CD14-positive monocyte (primary cell): ENCODE measurements at regions of chr19 and their contacts with region 1.

Region 1: GRCh38 chr19:35628565-35629331 is at the start of gene RBM42:
- DNase-seq: peak; percentile 97 to 98 (median 97)
- H3K4me3 ChIP-seq: peak within 1 kb of the TSS; percentile 41 to 99 (median 98)
- H3K4me3 Mint-ChIP-seq: peak within 1 kb of the TSS; percentile 93 to 98
- H3K27ac ChIP-seq: peak within 1 kb of the TSS; percentile 85 to 99
- H3K27ac Mint-ChIP-seq: peak within 1 kb of the TSS; percentile 96 to 100 (median 96)
- H3K4me1 ChIP-seq: peaks cover 14 to 15% of the 10 kb centered on the region in 2 donors
- H3K4me1 Mint-ChIP-seq: peaks cover 13% of the 10 kb centered on the region
- H3K27me3 ChIP-seq: no peaks in the 10 kb centered on the region
- H3K27me3 Mint-ChIP-seq: peaks cover 0 to 3% (median 2%) of the 10 kb centered on the region in 3 donors
- CTCF ChIP-seq: no peak
- polyA plus RNA-seq, gene RBM42: 29.5 to 53.3 (median 50.3) TPM

Region 2: GRCh38 chr19:35612559-35613321 is 16.0 kb before region 1 on chr19 and contains the start of gene HAUS5:
- intact Hi-C with region 1: loop called in 1 of 2 experiments (anchors 2 kb)
- DNase-seq: peak; percentile 87 to 94 (median 93)
- H3K4me3 ChIP-seq: peak within 1 kb of the TSS; percentile 72 to 96 (median 83)
- H3K4me3 Mint-ChIP-seq: peak within 1 kb of the TSS; percentile 76
- H3K27ac ChIP-seq: peak within 1 kb of the TSS; percentile 7 to 73
- H3K27ac Mint-ChIP-seq: peak within 1 kb of the TSS; percentile 41 to 87 (median 75)
- H3K4me1 ChIP-seq: peaks cover 30 to 35% of the 10 kb centered on the region in 2 donors
- H3K4me1 Mint-ChIP-seq: peaks cover 30% of the 10 kb centered on the region
- H3K27me3 ChIP-seq: no peaks in the 10 kb centered on the region
- H3K27me3 Mint-ChIP-seq: peaks cover 0 to 6% (median 2%) of the 10 kb centered on the region in 3 donors
- CTCF ChIP-seq: no peak
- polyA plus RNA-seq, gene HAUS5: 0.94 to 6.3 (median 0.99) TPM

Region 3: GRCh38 chr19:35648017-35648961 is 19.5 kb after region 1 on chr19 and contains the start of gene COX6B1:
- intact Hi-C with region 1: loop called in 1 of 2 experiments (anchors 2 kb)
- DNase-seq: peak; percentile 95 to 98 (median 96)
- H3K4me3 ChIP-seq: peak within 1 kb of the TSS; percentile 58 to 91 (median 66)
- H3K4me3 Mint-ChIP-seq: peak within 1 kb of the TSS; percentile 96 to 97
- H3K27ac ChIP-seq: peak within 1 kb of the TSS; percentile 63 to 91
- H3K27ac Mint-ChIP-seq: peak within 1 kb of the TSS; percentile 90 to 97 (median 93)
- H3K4me1 ChIP-seq: peaks cover 35 to 45% of the 10 kb centered on the region in 2 donors
- H3K4me1 Mint-ChIP-seq: peaks cover 39% of the 10 kb centered on the region
- H3K27me3 ChIP-seq: no peaks in the 10 kb centered on the region
- H3K27me3 Mint-ChIP-seq: peaks cover 0 to 1% (median 0%) of the 10 kb centered on the region in 3 donors
- CTCF ChIP-seq: no peak
- polyA plus RNA-seq, gene COX6B1: 611 to 948 (median 825) TPM

Region 4: DNA sequence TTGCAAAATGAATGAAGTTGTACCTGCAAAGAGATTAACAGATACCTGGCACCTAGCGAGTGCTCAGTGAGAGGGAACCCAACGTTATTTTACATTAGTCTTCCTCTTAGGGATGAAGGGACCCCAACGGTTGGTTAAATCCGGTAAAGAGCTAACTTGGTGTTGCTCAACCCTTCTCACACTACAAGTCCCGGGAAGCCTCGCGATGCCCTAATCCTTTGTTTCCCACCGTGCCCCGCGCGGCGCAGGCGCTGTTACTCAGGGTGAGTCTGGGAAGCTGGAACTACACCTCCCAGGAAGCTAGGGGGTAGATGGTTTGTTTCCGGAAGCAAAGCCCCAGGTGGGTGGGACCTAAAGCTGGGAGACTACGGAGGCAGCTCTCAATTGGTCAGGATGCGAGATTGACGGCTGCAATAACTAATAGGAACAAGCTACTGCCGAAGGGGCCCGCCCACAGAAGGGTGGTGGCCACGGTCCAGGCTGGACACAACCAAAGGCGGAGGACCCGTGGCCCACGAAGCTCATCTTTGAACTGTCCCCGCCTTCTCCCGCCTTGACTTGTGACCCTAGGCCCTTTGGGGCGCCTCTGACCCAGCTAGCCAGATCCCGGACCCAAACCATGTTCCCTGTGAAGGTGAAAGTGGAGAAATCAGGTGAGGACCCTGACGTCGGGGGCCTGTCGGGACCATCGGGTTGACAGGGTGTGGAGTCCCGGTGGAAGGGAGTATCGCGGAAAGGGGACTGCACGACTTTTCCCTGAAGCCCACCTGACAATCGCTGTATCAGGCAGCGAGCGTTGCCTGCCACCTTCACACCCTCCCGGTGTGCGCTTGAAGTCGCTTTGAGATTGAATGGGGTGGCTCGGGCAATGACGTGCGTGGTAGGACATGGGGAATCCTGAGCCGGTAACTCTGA is 119.6 kb after region 1 on chr19 and contains the start of gene LIN37:
- intact Hi-C with region 1: loop called in 1 of 2 experiments (anchors 5 kb)
- DNase-seq: peak; percentile 99 to 100 (median 99)
- H3K4me3 ChIP-seq: peak within 1 kb of the TSS; percentile 64 to 96 (median 87)
- H3K4me3 Mint-ChIP-seq: peak within 1 kb of the TSS; percentile 90 to 93
- H3K27ac ChIP-seq: peak within 1 kb of the TSS; percentile 11 to 71
- H3K27ac Mint-ChIP-seq: peak within 1 kb of the TSS; percentile 84 to 94 (median 91)
- H3K4me1 ChIP-seq: peaks cover 37 to 50% of the 10 kb centered on the region in 2 donors
- H3K4me1 Mint-ChIP-seq: peaks cover 36% of the 10 kb centered on the region
- H3K27me3 ChIP-seq: no peaks in the 10 kb centered on the region
- H3K27me3 Mint-ChIP-seq: peaks cover 0 to 3% (median 0%) of the 10 kb centered on the region in 3 donors
- CTCF ChIP-seq: no peak
- polyA plus RNA-seq, gene LIN37: 5.6 to 28.6 (median 7.2) TPM